CD4-positive, alpha-beta T cell (primary cell): ENCODE measurements at regions of chr16 and their contacts with region 1.

Region 1: DNA sequence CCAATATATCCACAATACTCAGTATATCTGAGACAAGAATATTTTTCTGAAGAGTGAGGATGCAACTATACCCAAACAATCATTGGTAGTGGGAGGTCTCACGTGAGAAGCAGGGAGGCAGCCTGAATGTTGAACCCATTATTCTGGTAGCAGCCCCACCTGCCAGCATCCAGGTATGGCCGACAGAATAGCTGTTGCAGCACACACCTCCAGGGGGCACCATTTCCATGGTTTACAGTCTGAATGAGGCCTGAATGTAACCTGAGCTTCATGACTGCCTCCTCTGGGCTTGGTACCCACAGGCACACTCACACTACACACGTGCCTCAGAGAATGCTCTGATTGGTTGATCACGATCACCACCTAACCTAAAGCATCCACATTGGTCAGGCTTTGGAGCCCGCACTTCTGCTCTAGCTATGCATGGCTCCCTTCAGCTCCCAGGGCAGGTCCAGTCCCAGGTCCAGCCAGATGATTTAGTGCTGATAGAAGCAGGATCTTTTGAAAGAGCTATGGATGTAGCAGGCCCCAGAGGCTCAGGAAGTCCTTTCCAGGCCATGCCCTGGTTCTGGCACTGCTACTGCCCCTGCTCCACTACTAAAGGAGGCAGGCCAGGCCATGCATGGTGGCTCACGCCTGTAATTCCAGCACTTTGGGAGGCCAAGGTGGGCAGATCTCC is 11.0 kb upstream of the CBFB start:
- DNase-seq: peak; percentile 74 to 93 (median 79)
- ATAC-seq: peak; percentile 90
- H3K4me3 ChIP-seq: no peak overlapping the region
- H3K4me3 Mint-ChIP-seq: peak overlapping the region; percentile 1
- H3K27ac ChIP-seq: no peak overlapping the region
- H3K27ac Mint-ChIP-seq: no peak overlapping the region
- H3K4me1 ChIP-seq: peaks cover 26% of the 10 kb centered on the region
- H3K4me1 Mint-ChIP-seq: no peaks in the 10 kb centered on the region
- H3K27me3 ChIP-seq: peaks cover 0 to 2% of the 10 kb centered on the region in 2 experiments
- H3K27me3 Mint-ChIP-seq: no peaks in the 10 kb centered on the region
- CTCF ChIP-seq: peak; percentile 50

Region 2: GRCh38 chr16:66127459-66128370 is 890.2 kb before region 1 on chr16:
- CTCF ChIA-PET with region 1: no interaction called
- POLR2A ChIA-PET with region 1: no interaction called
- intact Hi-C with region 1: no loop called
- DNase-seq: no peak
- ATAC-seq: no peak
- H3K4me3 ChIP-seq: no peak overlapping the region
- H3K4me3 Mint-ChIP-seq: no peak overlapping the region
- H3K27ac ChIP-seq: no peak overlapping the region
- H3K27ac Mint-ChIP-seq: no peak overlapping the region
- H3K4me1 ChIP-seq: no peaks in the 10 kb centered on the region
- H3K4me1 Mint-ChIP-seq: no peaks in the 10 kb centered on the region
- H3K27me3 ChIP-seq: peaks cover 35 to 37% of the 10 kb centered on the region in 2 experiments
- H3K27me3 Mint-ChIP-seq: peaks cover 62% of the 10 kb centered on the region
- CTCF ChIP-seq: no peak

Region 3: DNA sequence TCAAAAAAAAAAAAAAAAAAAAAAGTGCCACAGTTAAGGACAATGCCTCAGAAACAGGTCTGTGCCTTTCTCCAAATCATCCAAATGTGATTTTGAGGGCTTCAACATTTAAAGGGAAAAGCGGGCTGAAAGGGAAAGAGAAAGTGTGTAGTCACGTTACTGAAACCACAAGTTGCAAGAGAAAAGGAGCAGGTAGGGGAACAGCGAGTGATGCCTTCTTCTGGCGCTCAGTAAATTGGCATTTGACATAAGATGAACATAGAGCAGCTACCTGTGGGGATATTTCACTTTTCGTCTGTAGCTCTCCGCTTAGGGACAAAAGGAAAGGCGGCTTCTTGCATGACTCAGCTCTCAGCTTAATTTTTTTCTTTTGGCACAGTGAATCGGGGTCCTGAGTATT is 427.6 kb before region 1 on chr16:
- CTCF ChIA-PET with region 1: no interaction called
- POLR2A ChIA-PET with region 1: no interaction called
- intact Hi-C with region 1: no loop called
- DNase-seq: peak in 4 of 14 experiments; percentile 46 to 79 (median 72)
- ATAC-seq: peak; percentile 55
- H3K4me3 ChIP-seq: peak overlapping the region; percentile 53
- H3K4me3 Mint-ChIP-seq: peak overlapping the region; percentile 86
- H3K27ac ChIP-seq: no peak overlapping the region
- H3K27ac Mint-ChIP-seq: peak overlapping the region; percentile 52
- H3K4me1 ChIP-seq: peaks cover 26% of the 10 kb centered on the region
- H3K4me1 Mint-ChIP-seq: peaks cover 36% of the 10 kb centered on the region
- H3K27me3 ChIP-seq: no peaks in the 10 kb centered on the region
- H3K27me3 Mint-ChIP-seq: no peaks in the 10 kb centered on the region
- CTCF ChIP-seq: no peak

Region 4: DNA sequence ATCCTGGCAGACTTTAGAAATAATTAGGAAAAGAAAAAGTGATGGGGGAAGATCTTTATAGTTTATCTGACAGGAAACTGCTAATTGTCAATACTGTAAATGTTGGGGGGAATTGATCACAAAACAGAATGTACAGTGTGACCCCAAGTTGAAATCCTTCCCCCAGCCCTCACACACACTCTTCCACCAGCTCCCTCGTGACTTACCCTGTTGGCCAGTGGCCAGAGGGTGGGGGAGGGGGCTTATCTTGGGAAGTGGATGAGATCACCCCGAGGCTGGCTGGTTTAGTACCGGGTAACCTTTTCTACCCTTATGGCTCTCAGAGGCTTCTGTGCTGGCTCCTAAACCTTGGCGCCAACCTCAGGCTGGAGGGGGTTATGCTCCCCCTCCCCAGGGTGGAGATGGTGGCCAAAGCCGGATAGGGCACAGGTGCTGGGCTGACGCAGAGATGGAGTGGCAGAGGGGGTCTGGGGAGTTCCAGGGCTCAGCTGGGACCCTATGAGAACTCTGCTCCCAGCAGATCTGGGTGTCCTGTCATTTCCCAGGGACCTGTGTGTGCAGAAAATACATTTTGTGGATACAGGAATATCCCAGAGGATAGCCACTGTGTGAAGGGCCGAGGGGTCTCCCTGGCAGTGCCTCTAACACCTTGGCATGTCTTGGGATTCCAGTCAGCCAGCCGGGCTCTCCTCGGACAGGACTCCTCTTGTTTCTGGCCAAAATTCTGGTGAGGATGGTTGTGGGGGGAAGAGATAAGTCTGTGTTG is 117.8 kb before region 1 on chr16:
- CTCF ChIA-PET with region 1: no interaction called
- POLR2A ChIA-PET with region 1: no interaction called
- intact Hi-C with region 1: no loop called
- DNase-seq: no peak
- ATAC-seq: no peak
- H3K4me3 ChIP-seq: no peak overlapping the region
- H3K4me3 Mint-ChIP-seq: no peak overlapping the region
- H3K27ac ChIP-seq: no peak overlapping the region
- H3K27ac Mint-ChIP-seq: no peak overlapping the region
- H3K4me1 ChIP-seq: peaks cover 3% of the 10 kb centered on the region
- H3K4me1 Mint-ChIP-seq: no peaks in the 10 kb centered on the region
- H3K27me3 ChIP-seq: no peaks in the 10 kb centered on the region
- H3K27me3 Mint-ChIP-seq: no peaks in the 10 kb centered on the region
- CTCF ChIP-seq: no peak

Region 5: GRCh38 chr16:67100569-67101310 is 82.8 kb after region 1 on chr16:
- CTCF ChIA-PET with region 1: interaction called, 18 read pairs
- POLR2A ChIA-PET with region 1: interaction called, 5 read pairs
- intact Hi-C with region 1: loop called (anchors 1 to 2 kb)
- DNase-seq: peak in 3 of 14 experiments; percentile 48 to 54 (median 48)
- ATAC-seq: no peak
- H3K4me3 ChIP-seq: no peak overlapping the region
- H3K4me3 Mint-ChIP-seq: no peak overlapping the region
- H3K27ac ChIP-seq: no peak overlapping the region
- H3K27ac Mint-ChIP-seq: no peak overlapping the region
- H3K4me1 ChIP-seq: no peaks in the 10 kb centered on the region
- H3K4me1 Mint-ChIP-seq: no peaks in the 10 kb centered on the region
- H3K27me3 ChIP-seq: no peaks in the 10 kb centered on the region
- H3K27me3 Mint-ChIP-seq: no peaks in the 10 kb centered on the region
- CTCF ChIP-seq: peak; percentile 38